ENCODE measurements at regions of chr17 and their contacts with region 1.

Region 1: DNA sequence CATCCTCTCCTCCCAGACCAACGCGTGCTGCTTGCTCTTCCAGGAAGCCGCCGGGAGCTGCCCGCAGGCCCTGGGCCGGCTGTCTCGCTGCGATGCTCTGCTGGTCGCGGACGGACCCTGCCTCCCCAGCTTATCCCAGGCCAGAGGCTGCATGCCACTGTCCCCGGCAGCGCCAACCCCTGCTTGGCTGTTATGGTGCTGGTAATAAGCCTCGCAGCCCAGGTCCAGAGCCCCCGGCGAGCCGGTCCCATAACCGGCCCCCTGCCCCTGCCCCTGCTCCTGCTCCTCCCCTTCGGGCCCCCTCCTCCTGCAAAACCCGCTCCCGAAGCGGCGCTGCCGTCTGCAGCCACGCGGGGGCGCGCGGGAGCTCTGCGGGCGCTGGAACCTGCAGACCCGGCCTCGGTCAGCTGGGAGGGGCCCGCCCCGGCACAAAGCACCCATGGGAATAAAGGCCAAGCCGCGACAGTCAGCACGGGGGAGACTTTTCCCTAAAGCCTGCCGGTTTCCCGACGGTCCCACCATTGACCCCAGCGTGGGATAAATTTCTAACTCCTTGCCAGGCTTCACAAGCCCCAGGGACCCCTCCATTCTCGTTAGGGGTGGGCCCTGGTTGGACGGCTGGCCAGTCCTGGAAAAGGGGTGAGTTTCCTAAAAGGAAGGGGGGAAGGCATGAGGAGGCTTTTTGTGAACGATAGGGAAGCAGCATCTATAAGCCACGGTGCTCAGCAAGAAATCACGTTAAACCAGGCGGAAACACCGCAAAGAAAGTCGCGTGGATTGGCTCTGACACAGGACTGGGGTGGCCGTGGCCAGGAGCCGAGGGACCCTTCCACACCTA is 11.2 kb downstream of the ENPP7 start:
- DNase-seq: peak; percentile 62 to 88 (median 69)
- ATAC-seq: peak in 3 of 4 donors; percentile 65 to 77 (median 70)
- H3K4me3 ChIP-seq: peak overlapping the region in 4 of 12 donors; percentile 21 to 32 (median 24)
- H3K27ac ChIP-seq: no peak overlapping the region
- H3K4me1 ChIP-seq: peaks cover 0 to 18% (median 7%) of the 10 kb centered on the region in 12 donors
- H3K27me3 ChIP-seq: peaks cover 16 to 71% (median 52%) of the 10 kb centered on the region in 9 donors
- CTCF ChIP-seq: peak; percentile 85 to 97 (median 93)
- POLR2A ChIP-seq: no peak

Region 2: GRCh38 chr17:79695797-79696609 is 46.0 kb before region 1 on chr17:
- intact Hi-C with region 1: no loop called
- DNase-seq: peak in 3 of 5 donors; percentile 42 to 54 (median 44)
- ATAC-seq: peak in 3 of 4 donors; percentile 48 to 63 (median 61)
- H3K4me3 ChIP-seq: no peak overlapping the region
- H3K27ac ChIP-seq: no peak overlapping the region
- H3K4me1 ChIP-seq: peaks cover 0 to 31% (median 20%) of the 10 kb centered on the region in 12 donors
- H3K27me3 ChIP-seq: peaks cover 0 to 25% (median 3%) of the 10 kb centered on the region in 9 donors
- CTCF ChIP-seq: no peak
- POLR2A ChIP-seq: no peak

Region 3: DNA sequence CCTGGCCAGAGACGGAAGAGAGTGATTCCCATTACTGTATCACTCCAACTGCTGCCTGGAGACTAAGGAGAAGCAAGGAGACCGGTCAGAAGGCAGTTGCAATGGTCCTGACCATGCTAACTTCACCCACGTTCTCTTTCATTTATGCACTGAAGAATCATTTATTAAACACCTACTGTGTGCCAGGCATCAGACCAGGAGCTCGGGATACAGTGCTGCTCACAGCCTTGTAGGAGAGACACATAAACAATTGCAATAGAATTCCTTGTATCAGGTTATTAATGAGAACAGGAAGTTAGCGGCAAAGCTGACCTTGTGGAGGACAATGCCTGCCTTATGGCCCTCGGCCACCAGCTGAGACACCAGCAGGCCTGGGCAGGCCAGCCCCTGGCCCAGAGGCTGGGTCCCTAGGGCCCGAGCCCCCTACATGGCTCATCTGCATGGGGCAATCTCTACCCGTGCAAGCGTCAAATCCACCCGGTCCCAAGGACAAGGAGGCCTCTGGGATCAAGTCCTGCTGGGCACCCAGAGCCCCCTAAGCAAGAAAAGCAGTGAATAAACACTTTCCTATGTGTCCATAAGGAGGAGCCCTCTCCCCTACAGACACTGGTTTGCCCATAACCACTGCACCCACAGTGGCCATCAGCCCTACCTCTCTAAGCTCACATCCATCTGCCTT is 19.8 kb before region 1 on chr17:
- intact Hi-C with region 1: no loop called
- DNase-seq: no peak
- ATAC-seq: peak in 1 of 4 donors; percentile 20
- H3K4me3 ChIP-seq: no peak overlapping the region
- H3K27ac ChIP-seq: no peak overlapping the region
- H3K4me1 ChIP-seq: no peaks in the 10 kb centered on the region
- H3K27me3 ChIP-seq: no peaks in the 10 kb centered on the region
- CTCF ChIP-seq: no peak
- POLR2A ChIP-seq: no peak

Region 4: GRCh38 chr17:79796763-79797491 is 55.0 kb after region 1 on chr17 and contains the start of gene CBX8:
- intact Hi-C with region 1: loop called in 3 of 10 experiments (anchors 10 kb)
- DNase-seq: peak; percentile 100
- ATAC-seq: peak; percentile 93 to 99 (median 97)
- H3K4me3 ChIP-seq: peak within 1 kb of the TSS; percentile 56 to 95 (median 74)
- H3K27ac ChIP-seq: peak within 1 kb of the TSS; percentile 49 to 92 (median 86)
- H3K4me1 ChIP-seq: peaks cover 3 to 67% (median 50%) of the 10 kb centered on the region in 12 donors
- H3K27me3 ChIP-seq: peaks cover 50 to 67% (median 61%) of the 10 kb centered on the region in 9 donors
- CTCF ChIP-seq: peak in 10 of 12 donors; percentile 8 to 51 (median 27)
- POLR2A ChIP-seq: peak in 1 of 2 donors; percentile 54
- total RNA-seq, gene CBX8: 1.5 to 9.2 (median 5.3) TPM

Region 5: DNA sequence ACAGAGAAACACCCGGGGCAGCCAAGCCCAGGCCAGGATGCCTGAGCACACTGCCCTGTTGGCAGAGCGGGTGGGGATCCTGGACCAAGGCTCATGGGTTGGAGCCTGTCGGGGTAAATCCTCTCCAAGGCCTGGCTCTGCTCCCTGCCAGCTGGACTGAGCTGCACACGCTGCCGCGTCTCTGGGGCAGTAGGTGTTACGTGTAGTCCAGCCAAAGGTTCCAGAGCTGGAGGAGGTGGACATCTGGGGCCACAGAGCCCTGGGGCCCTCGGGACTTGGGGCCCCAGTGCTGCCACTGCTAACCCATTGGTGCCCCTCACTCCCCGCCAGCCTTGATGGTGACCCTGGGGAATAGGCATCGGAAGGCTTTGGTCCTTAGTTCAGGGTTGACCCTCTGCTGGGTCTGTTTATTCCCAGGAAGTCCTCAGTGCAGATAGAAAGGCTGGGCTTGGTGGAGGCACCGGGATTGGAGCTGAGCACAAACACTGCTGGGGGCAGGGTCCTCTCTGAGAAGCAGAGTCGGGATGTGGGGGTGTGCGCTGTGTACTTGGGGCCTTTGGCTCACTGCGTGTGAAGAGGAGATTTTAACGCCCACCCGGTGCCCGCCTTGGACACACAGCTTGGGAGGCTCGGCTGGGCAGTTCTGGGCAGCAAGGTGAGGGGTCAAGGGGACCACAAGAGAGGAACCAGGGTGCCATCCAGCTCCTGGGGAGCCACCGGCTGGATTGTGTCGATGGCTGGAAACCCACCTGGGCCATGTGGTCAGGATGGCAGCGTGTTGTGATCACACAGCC is 113.6 kb after region 1 on chr17:
- intact Hi-C with region 1: no loop called
- DNase-seq: peak in 1 of 5 donors; percentile 43
- ATAC-seq: peak in 1 of 4 donors; percentile 25
- H3K4me3 ChIP-seq: no peak overlapping the region
- H3K27ac ChIP-seq: no peak overlapping the region
- H3K4me1 ChIP-seq: peaks cover 0 to 12% (median 0%) of the 10 kb centered on the region in 12 donors
- H3K27me3 ChIP-seq: peaks cover 0 to 26% (median 4%) of the 10 kb centered on the region in 9 donors
- CTCF ChIP-seq: no peak
- POLR2A ChIP-seq: no peak

Region 6: GRCh38 chr17:79951361-79952264 is 209.6 kb after region 1 on chr17:
- intact Hi-C with region 1: no loop called
- DNase-seq: peak; percentile 47 to 80 (median 62)
- ATAC-seq: peak; percentile 40 to 82 (median 68)
- H3K4me3 ChIP-seq: peak overlapping the region in 7 of 12 donors; percentile 5 to 27 (median 10)
- H3K27ac ChIP-seq: peak overlapping the region in 9 of 12 donors; percentile 5 to 68 (median 22)
- H3K4me1 ChIP-seq: peaks cover 0 to 26% (median 18%) of the 10 kb centered on the region in 12 donors
- H3K27me3 ChIP-seq: no peaks in the 10 kb centered on the region
- CTCF ChIP-seq: peak in 1 of 12 donors; percentile 5
- POLR2A ChIP-seq: no peak